ENCODE measurements at regions of chr18 and their contacts with region 1.

Region 1: GRCh38 chr18:77177009-77177408 is 44.4 kb upstream of the MBP start:
- DNase-seq: no peak
- ATAC-seq: no peak
- H3K4me3 ChIP-seq: no peak overlapping the region
- H3K27ac ChIP-seq: no peak overlapping the region
- H3K4me1 ChIP-seq: no peaks in the 10 kb centered on the region
- H3K27me3 ChIP-seq: no peaks in the 10 kb centered on the region
- CTCF ChIP-seq: no peak
- POLR2A ChIP-seq: no peak

Region 2: DNA sequence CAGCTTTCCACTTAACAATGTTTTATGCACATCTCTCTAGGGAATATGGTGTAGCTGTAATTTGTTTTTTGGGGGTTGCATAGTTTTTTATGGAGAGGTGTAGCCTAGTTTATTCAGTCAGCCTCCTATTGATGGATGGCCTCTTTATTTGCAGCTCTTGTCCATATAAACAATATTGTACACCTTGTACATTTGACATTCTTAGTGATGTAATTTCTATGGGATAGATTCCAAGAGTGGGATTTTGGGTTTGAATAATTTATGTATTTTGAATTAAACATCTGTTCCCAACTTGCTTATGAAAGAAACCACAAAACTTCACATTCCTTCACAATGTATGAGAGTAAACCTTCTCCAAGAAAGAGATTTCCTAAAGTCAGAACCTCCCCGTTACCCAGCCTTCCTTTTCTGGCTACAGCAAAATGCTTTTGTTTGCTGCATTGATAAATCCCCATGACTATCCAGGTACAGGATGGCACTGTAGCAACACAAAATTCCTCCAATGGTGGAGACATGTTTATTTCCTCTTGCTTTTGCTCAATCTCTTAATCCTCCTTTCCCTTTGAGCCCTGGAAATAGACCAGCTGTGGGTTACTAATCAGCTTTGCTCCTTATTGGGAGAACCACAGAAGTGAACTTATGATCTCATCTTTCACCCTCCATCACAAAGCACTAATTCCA is 14.2 kb after region 1 on chr18:
- in situ Hi-C with region 1: no loop called
- intact Hi-C with region 1: loop called (anchors 1 kb)
- DNase-seq: no peak
- ATAC-seq: no peak
- H3K4me3 ChIP-seq: no peak overlapping the region
- H3K27ac ChIP-seq: no peak overlapping the region
- H3K4me1 ChIP-seq: no peaks in the 10 kb centered on the region
- H3K27me3 ChIP-seq: no peaks in the 10 kb centered on the region
- CTCF ChIP-seq: no peak
- POLR2A ChIP-seq: no peak

Region 3: DNA sequence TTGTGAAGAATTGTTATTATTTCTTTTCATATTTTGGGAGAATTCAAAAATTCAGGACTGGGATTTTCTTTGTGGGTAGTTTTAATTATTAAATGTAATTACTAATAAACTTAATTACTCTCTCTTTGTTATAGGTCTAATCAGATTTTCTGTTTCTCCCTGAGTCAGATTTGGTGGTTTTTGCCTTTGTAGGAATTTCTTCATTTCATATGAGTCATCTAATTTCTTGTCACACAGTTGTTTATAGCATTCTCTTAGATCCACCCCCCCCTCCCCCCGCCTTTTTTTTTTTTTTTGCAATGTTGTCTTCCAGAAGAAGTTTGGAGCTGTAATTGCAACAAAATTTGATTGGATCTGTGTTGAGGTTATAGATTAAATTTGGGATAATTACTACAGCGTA is 46.6 kb after region 1 on chr18:
- in situ Hi-C with region 1: no loop called
- intact Hi-C with region 1: loop called (anchors 10 kb)
- DNase-seq: no peak
- ATAC-seq: peak in 1 of 2 donors; percentile 19
- H3K4me3 ChIP-seq: no peak overlapping the region
- H3K27ac ChIP-seq: no peak overlapping the region
- H3K4me1 ChIP-seq: no peaks in the 10 kb centered on the region
- H3K27me3 ChIP-seq: peaks cover 0 to 2% (median 0%) of the 10 kb centered on the region in 3 donors
- CTCF ChIP-seq: no peak
- POLR2A ChIP-seq: no peak

Measured in gastrocnemius medialis (tissue), 4 donors.